PC-3 (cell line): ENCODE measurements at regions of chr17 and their contacts with region 1.

Region 1: DNA sequence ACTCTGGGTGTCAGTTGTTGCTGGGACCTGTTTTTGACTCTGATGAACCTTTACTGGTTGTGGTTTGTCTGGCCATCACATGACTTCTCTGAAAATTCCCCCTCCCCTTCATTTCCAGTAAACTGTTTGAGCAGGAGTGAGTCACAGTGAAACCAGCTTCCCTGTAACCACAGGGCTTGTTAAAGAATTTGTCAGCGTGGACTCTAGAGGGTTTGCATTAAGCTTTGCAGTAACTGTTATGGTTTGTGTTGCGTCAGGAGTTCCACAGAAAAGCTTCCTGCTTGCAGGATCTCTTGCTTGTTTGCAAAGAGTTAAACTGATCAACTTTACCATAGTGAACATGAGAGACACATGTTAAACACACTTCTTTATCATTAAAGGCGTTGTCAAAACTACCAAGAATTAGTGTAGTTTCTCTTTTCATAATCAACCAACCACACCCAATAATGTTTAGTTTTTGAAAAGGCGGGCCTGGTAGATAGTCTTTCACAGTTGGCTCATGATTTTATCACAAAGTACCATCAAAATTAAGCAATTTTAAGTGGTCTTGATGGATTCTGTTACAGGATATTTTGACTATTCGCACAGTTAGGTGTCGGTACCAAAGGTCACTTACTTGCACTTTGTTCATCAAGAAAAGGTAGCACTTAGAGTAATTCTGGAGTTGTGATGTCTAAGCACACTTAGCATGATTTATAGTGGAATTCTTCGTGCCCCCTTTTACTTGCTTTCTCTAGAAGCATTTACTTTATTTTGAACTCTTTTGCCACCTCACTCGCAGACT is 79.3 kb downstream of the VMP1 start:
- DNase-seq: peak; percentile 100
- ATAC-seq: peak; percentile 83
- H3K4me3 ChIP-seq: peak overlapping the region; percentile 42
- H3K27ac ChIP-seq: peak overlapping the region; percentile 88
- H3K4me1 ChIP-seq: peaks cover 62% of the 10 kb centered on the region
- H3K27me3 ChIP-seq: no peaks in the 10 kb centered on the region
- CTCF ChIP-seq: no peak

Region 2: DNA sequence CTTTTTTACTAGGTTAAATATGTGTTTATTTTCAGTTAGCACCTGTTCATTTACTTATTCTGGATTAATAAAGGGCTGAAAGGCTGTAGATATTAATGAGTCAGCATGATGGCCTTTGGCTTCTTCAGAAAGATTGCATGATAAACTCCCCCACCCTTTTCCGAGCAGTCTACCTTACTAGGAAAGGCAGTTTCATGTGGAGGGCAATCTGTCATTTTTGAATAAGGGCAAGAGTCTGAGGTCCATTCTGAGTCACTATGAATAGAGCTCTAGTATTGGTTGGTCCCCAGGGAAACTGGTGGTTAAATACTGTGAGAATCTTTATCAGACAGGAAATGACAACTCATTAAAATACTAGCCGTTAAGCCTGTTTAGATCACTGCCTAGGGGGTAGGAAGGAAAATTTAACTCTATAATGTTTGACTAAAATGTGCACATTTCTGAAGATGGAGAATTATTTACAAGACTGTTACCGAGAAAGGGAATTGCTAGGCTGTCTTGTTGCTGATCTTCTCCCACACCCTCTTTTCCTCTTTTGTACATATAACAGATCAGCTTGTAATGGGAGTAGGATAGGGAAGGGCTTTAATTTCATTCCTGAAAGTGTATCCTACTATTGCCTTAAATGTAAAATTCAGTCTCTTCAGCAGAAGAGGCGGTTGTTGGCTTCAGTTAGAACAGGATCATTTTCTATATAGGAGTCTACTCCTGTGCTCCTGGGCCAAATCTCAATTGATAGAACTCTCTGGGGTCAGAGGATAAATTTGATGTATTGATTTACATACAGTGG is 42.7 kb after region 1 on chr17:
- CTCF ChIA-PET with region 1: interaction called, 12 read pairs
- POLR2A ChIA-PET with region 1: interaction called, 15 read pairs
- intact Hi-C with region 1: loop called (anchors 1 kb)
- DNase-seq: peak; percentile 100
- ATAC-seq: peak; percentile 88
- H3K4me3 ChIP-seq: peak overlapping the region; percentile 51
- H3K27ac ChIP-seq: peak overlapping the region; percentile 96
- H3K4me1 ChIP-seq: peaks cover 66% of the 10 kb centered on the region
- H3K27me3 ChIP-seq: no peaks in the 10 kb centered on the region
- CTCF ChIP-seq: no peak

Region 3: GRCh38 chr17:59846394-59847165 is 59.9 kb after region 1 on chr17:
- CTCF ChIA-PET with region 1: interaction called, 4 read pairs
- POLR2A ChIA-PET with region 1: interaction called, 42 read pairs
- intact Hi-C with region 1: no loop called
- DNase-seq: peak; percentile 99
- ATAC-seq: peak; percentile 32
- H3K4me3 ChIP-seq: peak overlapping the region; percentile 54; the same call in 1 of the 2 replicates
- H3K27ac ChIP-seq: peak overlapping the region; percentile 95
- H3K4me1 ChIP-seq: peaks cover 50% of the 10 kb centered on the region
- H3K27me3 ChIP-seq: no peaks in the 10 kb centered on the region
- CTCF ChIP-seq: no peak

Region 4: DNA sequence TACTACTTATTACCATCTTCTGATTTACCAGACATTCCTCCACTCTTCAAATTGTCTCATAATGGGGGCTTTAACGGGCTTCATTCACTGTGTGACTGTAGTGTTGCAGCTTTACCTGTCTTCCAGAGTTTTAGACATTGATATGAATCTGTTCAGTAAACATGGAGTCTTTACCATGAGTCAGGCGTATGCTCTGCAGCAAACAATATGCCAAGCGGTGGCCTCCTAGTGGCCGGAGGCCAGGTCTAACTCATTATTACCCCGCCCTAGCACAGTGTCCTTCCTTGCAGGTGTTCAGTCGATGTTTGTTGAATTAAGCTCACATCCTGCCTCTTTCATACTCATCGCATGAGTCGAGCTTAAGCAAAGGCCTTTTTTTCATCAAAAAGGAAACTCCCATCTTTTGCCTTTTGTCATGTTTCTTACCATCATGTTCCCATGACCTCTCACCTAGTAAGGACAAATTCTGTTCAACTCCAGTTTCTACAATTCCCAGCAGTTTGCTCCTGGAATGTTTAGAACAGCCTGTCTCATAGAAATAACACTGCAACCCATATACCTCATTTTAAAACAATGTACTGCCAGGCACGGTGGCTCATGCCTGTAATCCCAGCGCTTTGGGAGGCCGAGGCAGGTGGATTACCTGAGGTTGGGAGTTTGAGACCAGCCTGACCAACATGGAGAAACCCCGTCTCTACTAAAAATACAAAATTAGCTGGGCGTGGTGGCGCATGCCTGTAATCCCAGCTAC is 66.6 kb after region 1 on chr17:
- CTCF ChIA-PET with region 1: interaction called, 6 read pairs
- POLR2A ChIA-PET with region 1: interaction called, 42 read pairs
- intact Hi-C with region 1: loop called (anchors 1 kb)
- DNase-seq: peak; percentile 100
- ATAC-seq: peak; percentile 90
- H3K4me3 ChIP-seq: no peak overlapping the region
- H3K27ac ChIP-seq: peak overlapping the region; percentile 92
- H3K4me1 ChIP-seq: peaks cover 62% of the 10 kb centered on the region
- H3K27me3 ChIP-seq: no peaks in the 10 kb centered on the region
- CTCF ChIP-seq: peak; percentile 90